ENCODE measurements at regions of chr17 and their contacts with region 1.

Region 1: GRCh38 chr17:4908301-4908700 is 5.4 kb upstream of the CHRNE start:
- DNase-seq: no peak
- H3K4me3 ChIP-seq: no peak overlapping the region
- H3K27me3 ChIP-seq: no peaks in the 10 kb centered on the region
- CTCF ChIP-seq: no peak

Region 2: GRCh38 chr17:4920351-4921048 is 12.2 kb after region 1 on chr17:
- CTCF ChIA-PET with region 1: interaction called, 14 read pairs
- POLR2A ChIA-PET with region 1: no interaction called
- DNase-seq: no peak
- H3K4me3 ChIP-seq: no peak overlapping the region
- H3K27me3 ChIP-seq: no peaks in the 10 kb centered on the region
- CTCF ChIP-seq: no peak

Region 3: DNA sequence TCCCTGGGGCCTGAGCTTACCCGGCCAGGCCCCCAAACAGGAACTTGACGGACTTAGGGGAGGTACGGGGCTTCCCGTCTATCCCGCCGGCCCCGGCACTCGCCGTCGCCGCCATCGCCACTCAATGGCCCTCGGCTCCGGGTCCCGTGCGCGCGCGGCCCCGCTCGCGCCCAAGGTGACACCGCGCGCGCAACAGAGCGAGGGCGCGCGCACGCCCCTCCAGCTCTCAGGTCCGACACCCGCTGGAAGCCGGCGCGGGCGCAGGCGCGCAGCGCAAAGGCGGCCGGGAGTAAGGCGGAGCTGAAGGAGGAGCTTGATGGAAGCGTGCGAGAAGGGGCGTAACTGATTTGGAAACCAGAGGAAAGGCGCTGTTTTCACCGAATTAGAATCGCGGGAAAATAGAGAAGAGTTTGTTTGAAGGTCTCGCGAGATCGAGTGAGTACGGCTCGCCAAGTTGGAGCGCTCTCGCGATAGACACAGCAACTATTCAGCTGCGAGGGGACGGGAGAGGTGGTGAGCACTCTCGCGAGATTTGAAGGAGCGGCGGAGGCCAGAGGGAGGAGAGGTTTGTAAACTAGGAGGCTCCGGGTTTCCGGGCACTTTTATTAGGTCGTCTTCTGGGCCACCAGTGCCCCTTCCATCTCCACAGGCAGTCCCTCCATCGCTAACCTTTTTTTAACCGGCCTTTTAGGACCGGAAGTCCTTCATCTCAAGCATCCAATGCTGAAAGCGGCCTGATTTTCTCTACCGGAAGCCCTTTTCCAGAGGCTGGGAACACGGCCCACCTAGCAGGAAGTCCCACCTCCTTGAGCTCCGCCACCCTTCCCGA is 31.7 kb after region 1 on chr17 and contains the starts of genes RNF167 and SLC25A11:
- CTCF ChIA-PET with region 1: interaction called, 17 read pairs
- POLR2A ChIA-PET with region 1: interaction called, 3 read pairs
- DNase-seq: peak; percentile 99
- H3K4me3 ChIP-seq: peak within 1 kb of the TSS; percentile 72
- H3K27me3 ChIP-seq: no peaks in the 10 kb centered on the region
- CTCF ChIP-seq: no peak
- polyA plus RNA-seq, gene RNF167: 69.9 and 73.5 TPM in 2 replicates
- polyA plus RNA-seq, gene SLC25A11: 38.5 and 70.7 TPM in 2 replicates

Region 4: GRCh38 chr17:4966844-4967538 is 58.7 kb after region 1 on chr17:
- CTCF ChIA-PET with region 1: interaction called, 19 read pairs
- POLR2A ChIA-PET with region 1: no interaction called
- DNase-seq: peak; percentile 99
- H3K4me3 ChIP-seq: peak overlapping the region; percentile 56
- H3K27me3 ChIP-seq: no peaks in the 10 kb centered on the region
- CTCF ChIP-seq: no peak

Region 5: GRCh38 chr17:4986951-4987766 is 78.9 kb after region 1 on chr17 and contains the start of gene CAMTA2:
- CTCF ChIA-PET with region 1: interaction called, 24 read pairs
- POLR2A ChIA-PET with region 1: no interaction called
- DNase-seq: no peak
- H3K4me3 ChIP-seq: peak within 1 kb of the TSS; percentile 60
- H3K27me3 ChIP-seq: no peaks in the 10 kb centered on the region
- CTCF ChIP-seq: peak; percentile 52
- polyA plus RNA-seq, gene CAMTA2: 40.6 and 65.6 TPM in 2 replicates

Region 6: GRCh38 chr17:4997302-4998026 is 89.2 kb after region 1 on chr17 and contains the starts of genes INCA1 and KIF1C:
- CTCF ChIA-PET with region 1: interaction called, 11 read pairs
- POLR2A ChIA-PET with region 1: no interaction called
- DNase-seq: peak; percentile 28
- H3K4me3 ChIP-seq: peak within 1 kb of the TSS; percentile 95
- H3K27me3 ChIP-seq: no peaks in the 10 kb centered on the region
- CTCF ChIP-seq: 0 out of 2 replicates have a peak, but pooled peaks have one; percentile 4
- polyA plus RNA-seq, gene INCA1: 0.55 and 1.3 TPM in 2 replicates
- polyA plus RNA-seq, gene KIF1C: 72.8 and 81.6 TPM in 2 replicates

Region 7: DNA sequence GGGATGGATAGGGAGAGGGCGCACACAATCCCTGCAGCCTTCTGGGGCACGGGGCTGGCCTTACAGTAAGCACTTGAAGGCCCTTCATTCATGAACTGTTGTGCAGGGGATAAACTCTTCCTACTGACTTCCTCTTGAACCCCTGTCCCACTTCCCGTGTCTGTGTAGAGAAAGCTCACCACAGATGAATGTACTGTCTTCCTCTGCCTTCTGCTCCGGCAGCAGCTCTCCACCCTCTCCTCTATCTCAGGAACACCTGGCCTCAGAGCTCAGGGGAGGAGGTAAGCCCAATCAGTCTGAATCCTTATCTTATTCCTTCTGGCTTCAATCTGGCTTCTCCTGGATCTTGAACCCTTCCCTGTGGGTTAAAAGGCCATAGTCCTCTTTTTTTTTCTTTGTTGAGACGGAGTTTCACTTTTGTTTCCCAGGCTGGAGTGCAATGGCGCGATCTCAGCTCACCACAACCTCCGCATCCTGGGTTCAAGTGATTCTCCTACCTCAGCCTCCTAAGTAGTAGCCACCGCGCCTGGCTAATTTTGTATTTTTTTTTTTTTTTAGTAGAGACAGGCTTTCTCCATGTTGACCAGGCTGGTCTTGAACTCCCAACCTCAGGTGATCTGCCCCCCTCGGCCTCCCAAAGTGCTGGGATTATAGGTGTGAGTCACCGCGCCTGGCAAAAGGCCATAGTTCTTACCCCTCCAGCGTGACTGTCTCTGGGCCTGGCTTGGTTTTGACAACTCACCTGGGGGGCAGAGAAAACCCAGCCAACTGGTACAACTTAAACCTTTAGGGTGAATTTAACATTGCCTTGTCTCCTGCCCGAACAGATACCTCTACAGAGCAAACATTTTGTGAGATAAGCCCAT is 134.1 kb after region 1 on chr17:
- CTCF ChIA-PET with region 1: no interaction called
- POLR2A ChIA-PET with region 1: no interaction called
- DNase-seq: no peak
- H3K4me3 ChIP-seq: no peak overlapping the region
- H3K27me3 ChIP-seq: no peaks in the 10 kb centered on the region; the same call in 1 of the 2 replicates
- CTCF ChIP-seq: no peak

Region 8: DNA sequence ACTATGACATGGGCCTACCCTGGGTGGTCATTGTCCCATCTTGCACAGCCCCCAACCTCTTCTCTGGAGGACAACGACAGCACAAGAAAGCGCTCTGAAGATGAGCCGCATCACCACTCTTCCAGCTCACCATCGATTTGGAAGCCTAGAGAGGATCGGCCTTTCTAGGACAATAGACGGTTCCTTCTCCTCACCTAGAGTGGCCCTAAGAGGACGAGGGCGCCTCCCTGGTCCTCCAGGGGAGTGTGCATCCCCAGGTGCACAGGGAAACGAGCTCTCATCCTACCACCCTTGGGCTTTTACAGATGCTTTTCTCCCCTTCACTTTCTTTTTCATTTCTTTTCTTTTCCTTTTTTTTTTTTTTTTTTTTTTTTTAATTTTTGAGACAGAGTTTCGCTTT is 147.2 kb after region 1 on chr17:
- CTCF ChIA-PET with region 1: interaction called, 27 read pairs
- POLR2A ChIA-PET with region 1: no interaction called
- DNase-seq: no peak
- H3K4me3 ChIP-seq: no peak overlapping the region
- H3K27me3 ChIP-seq: peaks cover 1% of the 10 kb centered on the region; the same call in 1 of the 2 replicates
- CTCF ChIP-seq: no peak

Measured in BJ (cell line).